ENCODE measurements at regions of chr11 and their contacts with region 1.

Region 1: GRCh38 chr11:134360050-134360835 is 28.5 kb downstream of the GLB1L2 start:
- DNase-seq: peak; percentile 54
- ATAC-seq: peak; percentile 99
- H3K4me3 ChIP-seq: no peak overlapping the region
- H3K27ac ChIP-seq: no peak overlapping the region
- H3K4me1 ChIP-seq: no peaks in the 10 kb centered on the region
- H3K27me3 ChIP-seq: no peaks in the 10 kb centered on the region
- CTCF ChIP-seq: peak; percentile 86 to 93 (median 92)
- POLR2A ChIP-seq: no peak
- RAD21 ChIP-seq: peak; percentile 95

Region 2: DNA sequence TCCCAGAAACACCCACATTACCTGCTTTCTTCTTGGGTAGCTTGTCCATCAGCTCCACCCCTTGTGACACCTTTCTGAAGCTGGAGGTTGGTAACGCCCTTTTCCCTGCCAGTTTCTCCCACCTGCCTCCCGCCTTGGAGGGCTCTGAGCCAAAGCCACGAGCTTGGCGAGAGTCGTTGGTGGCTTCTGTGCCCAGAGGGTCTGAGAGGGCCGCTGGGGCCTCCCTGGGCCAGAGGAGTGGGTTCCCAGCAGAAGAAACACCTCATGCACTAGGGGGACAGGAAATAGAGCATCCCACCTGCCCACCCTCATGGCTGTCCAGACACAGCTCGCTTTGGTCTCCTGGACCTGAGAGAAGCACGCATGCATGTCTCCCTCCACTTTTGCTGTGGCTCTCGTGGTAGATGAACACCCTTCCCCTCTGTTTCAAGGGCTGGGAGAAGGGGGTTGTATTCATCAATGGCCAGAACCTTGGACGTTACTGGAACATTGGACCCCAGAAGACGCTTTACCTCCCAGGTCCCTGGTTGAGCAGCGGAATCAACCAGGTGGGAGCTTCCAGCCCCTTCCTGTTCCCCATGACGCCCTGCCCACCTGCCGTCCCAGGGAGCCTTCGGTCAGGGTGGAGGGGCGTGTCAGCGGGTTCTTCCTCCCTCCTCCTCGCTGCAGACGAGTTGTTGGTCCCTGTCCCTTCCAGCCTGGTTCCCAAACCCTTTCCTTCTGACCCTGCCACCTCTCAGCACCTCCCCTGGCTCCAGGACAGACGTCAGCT is 14.1 kb after region 1 on chr11:
- CTCF ChIA-PET with region 1: no interaction called
- POLR2A ChIA-PET with region 1: no interaction called
- RAD21 ChIA-PET with region 1: no interaction called
- intact Hi-C with region 1: no loop called
- DNase-seq: no peak
- ATAC-seq: no peak
- H3K4me3 ChIP-seq: no peak overlapping the region
- H3K27ac ChIP-seq: no peak overlapping the region
- H3K4me1 ChIP-seq: no peaks in the 10 kb centered on the region
- H3K27me3 ChIP-seq: no peaks in the 10 kb centered on the region
- CTCF ChIP-seq: no peak
- POLR2A ChIP-seq: no peak
- RAD21 ChIP-seq: no peak

Region 3: GRCh38 chr11:134578807-134579723 is 218.8 kb after region 1 on chr11:
- CTCF ChIA-PET with region 1: no interaction called
- POLR2A ChIA-PET with region 1: no interaction called
- RAD21 ChIA-PET with region 1: no interaction called
- intact Hi-C with region 1: loop called (anchors 1 kb)
- DNase-seq: peak; percentile 18
- ATAC-seq: peak; percentile 86
- H3K4me3 ChIP-seq: 0 out of 4 replicates have a peak overlapping the region, but pooled peaks of 1 of the 2 experiments have one; percentile 44
- H3K27ac ChIP-seq: no peak overlapping the region
- H3K4me1 ChIP-seq: peaks cover 9 to 13% of the 10 kb centered on the region in 2 experiments
- H3K27me3 ChIP-seq: no peaks in the 10 kb centered on the region
- CTCF ChIP-seq: peak; percentile 26 to 58 (median 36); a peak in 3 of 6 replicates
- POLR2A ChIP-seq: no peak
- RAD21 ChIP-seq: peak; percentile 66

Region 4: GRCh38 chr11:134592391-134592990 is 232.2 kb after region 1 on chr11:
- CTCF ChIA-PET with region 1: no interaction called
- POLR2A ChIA-PET with region 1: no interaction called
- RAD21 ChIA-PET with region 1: no interaction called
- intact Hi-C with region 1: loop called (anchors 5 kb)
- DNase-seq: peak; percentile 49
- ATAC-seq: peak; percentile 98
- H3K4me3 ChIP-seq: no peak overlapping the region
- H3K27ac ChIP-seq: no peak overlapping the region
- H3K4me1 ChIP-seq: no peaks in the 10 kb centered on the region
- H3K27me3 ChIP-seq: peaks cover 22% of the 10 kb centered on the region; the same call in 1 of the 2 replicates
- CTCF ChIP-seq: peak; percentile 57 to 83 (median 82); a peak in 5 of 6 replicates
- POLR2A ChIP-seq: no peak
- RAD21 ChIP-seq: peak; percentile 71

Region 5: GRCh38 chr11:134634897-134635831 is 274.9 kb after region 1 on chr11:
- CTCF ChIA-PET with region 1: no interaction called
- POLR2A ChIA-PET with region 1: no interaction called
- RAD21 ChIA-PET with region 1: no interaction called
- intact Hi-C with region 1: loop called (anchors 5 kb)
- DNase-seq: no peak
- ATAC-seq: no peak
- H3K4me3 ChIP-seq: no peak overlapping the region
- H3K27ac ChIP-seq: no peak overlapping the region
- H3K4me1 ChIP-seq: peaks cover 8 to 12% of the 10 kb centered on the region in 2 experiments
- H3K27me3 ChIP-seq: no peaks in the 10 kb centered on the region
- CTCF ChIP-seq: peak in 2 of 3 experiments; percentile 16 to 36; a peak in 2 of 6 replicates
- POLR2A ChIP-seq: no peak
- RAD21 ChIP-seq: peak; percentile 26; the same call in 1 of the 2 replicates

Region 6: GRCh38 chr11:134725716-134726639 is 365.7 kb after region 1 on chr11:
- CTCF ChIA-PET with region 1: no interaction called
- POLR2A ChIA-PET with region 1: no interaction called
- RAD21 ChIA-PET with region 1: interaction called in 1 of 2 experiments, 3 read pairs
- intact Hi-C with region 1: loop called (anchors 1 kb)
- DNase-seq: peak; percentile 35
- ATAC-seq: peak; percentile 92
- H3K4me3 ChIP-seq: no peak overlapping the region
- H3K27ac ChIP-seq: no peak overlapping the region
- H3K4me1 ChIP-seq: no peaks in the 10 kb centered on the region
- H3K27me3 ChIP-seq: peaks cover 27% of the 10 kb centered on the region; the same call in 1 of the 2 replicates
- CTCF ChIP-seq: peak; percentile 66 to 79 (median 71); a peak in 5 of 6 replicates
- POLR2A ChIP-seq: no peak
- RAD21 ChIP-seq: peak; percentile 60

Region 7: DNA sequence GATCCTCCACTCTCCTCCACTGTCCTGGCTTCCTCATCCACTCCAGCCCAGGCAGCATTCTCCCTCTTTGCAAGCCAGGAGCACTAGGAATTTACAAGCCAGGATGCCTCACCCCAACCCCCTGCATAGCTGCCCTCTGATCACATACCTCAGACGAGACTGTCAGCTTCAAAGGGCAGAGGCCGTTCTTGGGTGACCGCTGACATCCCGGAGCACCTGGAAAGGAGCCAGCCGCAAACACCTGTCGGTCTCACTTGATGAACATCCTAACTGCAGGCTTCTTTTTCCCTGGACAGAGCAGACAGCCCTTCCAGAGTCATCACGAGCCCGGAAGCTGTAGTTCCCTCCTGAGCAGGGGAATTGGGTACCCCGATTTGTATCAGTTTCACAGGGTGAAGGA is 503.1 kb after region 1 on chr11:
- CTCF ChIA-PET with region 1: no interaction called
- POLR2A ChIA-PET with region 1: no interaction called
- RAD21 ChIA-PET with region 1: no interaction called
- intact Hi-C with region 1: loop called (anchors 5 kb)
- DNase-seq: no peak
- ATAC-seq: no peak
- H3K4me3 ChIP-seq: no peak overlapping the region
- H3K27ac ChIP-seq: no peak overlapping the region
- H3K4me1 ChIP-seq: peaks cover 0 to 2% of the 10 kb centered on the region in 2 experiments; a peak in 1 of 4 replicates
- H3K27me3 ChIP-seq: no peaks in the 10 kb centered on the region; the same call in 1 of the 2 replicates
- CTCF ChIP-seq: no peak
- POLR2A ChIP-seq: no peak
- RAD21 ChIP-seq: no peak